ENCODE measurements at regions of chr15 and their contacts with region 1.

Region 1: DNA sequence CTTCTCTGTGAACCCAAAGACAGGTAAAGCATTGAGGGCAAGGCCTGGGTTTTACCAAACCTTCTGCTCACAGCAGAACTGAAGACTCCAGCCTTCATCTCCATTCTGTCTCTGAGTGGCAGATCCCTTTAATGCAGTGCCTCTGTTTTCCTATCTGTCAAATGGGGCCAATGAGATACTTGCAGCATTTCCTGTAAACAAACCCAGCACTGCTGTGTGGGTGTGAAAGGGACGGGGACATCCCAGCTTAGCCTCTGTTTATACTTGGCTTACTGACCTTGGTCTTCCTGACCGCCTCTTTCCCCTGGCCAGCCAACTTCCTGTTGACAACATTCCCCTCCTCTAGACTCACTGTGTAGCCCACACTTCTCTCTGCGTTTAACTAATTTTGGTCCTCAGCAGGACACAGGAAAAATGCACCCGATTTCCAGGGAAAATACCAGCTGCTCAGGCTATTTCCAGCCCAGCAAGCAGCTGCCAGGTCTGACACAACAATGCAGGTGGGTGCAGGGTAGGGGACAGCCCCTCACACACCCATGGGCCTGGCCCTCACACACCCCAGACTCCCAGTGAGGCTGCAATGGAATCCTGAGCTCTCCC is 105.9 kb upstream of the HERC1 start:
- DNase-seq: peak; percentile 98
- H3K4me3 ChIP-seq: no peak overlapping the region
- H3K27ac ChIP-seq: peak overlapping the region; percentile 73
- H3K4me1 ChIP-seq: peaks cover 38% of the 10 kb centered on the region
- H3K27me3 ChIP-seq: no peaks in the 10 kb centered on the region
- CTCF ChIP-seq: no peak
- POLR2A ChIP-seq: no peak

Region 2: GRCh38 chr15:63839722-63840121 is 99.9 kb before region 1 on chr15:
- CTCF ChIA-PET with region 1: interaction called, 5 read pairs
- POLR2A ChIA-PET with region 1: no interaction called
- dilution Hi-C with region 1: no loop called
- intact Hi-C with region 1: loop called (anchors 1 kb)
- DNase-seq: peak; percentile 65
- H3K4me3 ChIP-seq: no peak overlapping the region
- H3K27ac ChIP-seq: no peak overlapping the region
- H3K4me1 ChIP-seq: peaks cover 45% of the 10 kb centered on the region
- H3K27me3 ChIP-seq: no peaks in the 10 kb centered on the region
- CTCF ChIP-seq: no peak
- POLR2A ChIP-seq: no peak

Region 3: GRCh38 chr15:63858880-63859279 is 80.8 kb before region 1 on chr15:
- CTCF ChIA-PET with region 1: interaction called, 3 read pairs
- POLR2A ChIA-PET with region 1: no interaction called
- dilution Hi-C with region 1: no loop called
- intact Hi-C with region 1: loop called (anchors 1 kb)
- DNase-seq: peak; percentile 95
- H3K4me3 ChIP-seq: no peak overlapping the region
- H3K27ac ChIP-seq: peak overlapping the region; percentile 90
- H3K4me1 ChIP-seq: peaks cover 28% of the 10 kb centered on the region
- H3K27me3 ChIP-seq: no peaks in the 10 kb centered on the region
- CTCF ChIP-seq: no peak
- POLR2A ChIP-seq: no peak

Region 4: GRCh38 chr15:63909819-63910437 is 29.7 kb before region 1 on chr15:
- CTCF ChIA-PET with region 1: interaction called, 12 read pairs
- POLR2A ChIA-PET with region 1: no interaction called
- dilution Hi-C with region 1: no loop called
- intact Hi-C with region 1: loop called (anchors 5 kb)
- DNase-seq: peak; percentile 89
- H3K4me3 ChIP-seq: no peak overlapping the region
- H3K27ac ChIP-seq: peak overlapping the region; percentile 39
- H3K4me1 ChIP-seq: peaks cover 32% of the 10 kb centered on the region
- H3K27me3 ChIP-seq: no peaks in the 10 kb centered on the region
- CTCF ChIP-seq: no peak
- POLR2A ChIP-seq: no peak

Region 5: DNA sequence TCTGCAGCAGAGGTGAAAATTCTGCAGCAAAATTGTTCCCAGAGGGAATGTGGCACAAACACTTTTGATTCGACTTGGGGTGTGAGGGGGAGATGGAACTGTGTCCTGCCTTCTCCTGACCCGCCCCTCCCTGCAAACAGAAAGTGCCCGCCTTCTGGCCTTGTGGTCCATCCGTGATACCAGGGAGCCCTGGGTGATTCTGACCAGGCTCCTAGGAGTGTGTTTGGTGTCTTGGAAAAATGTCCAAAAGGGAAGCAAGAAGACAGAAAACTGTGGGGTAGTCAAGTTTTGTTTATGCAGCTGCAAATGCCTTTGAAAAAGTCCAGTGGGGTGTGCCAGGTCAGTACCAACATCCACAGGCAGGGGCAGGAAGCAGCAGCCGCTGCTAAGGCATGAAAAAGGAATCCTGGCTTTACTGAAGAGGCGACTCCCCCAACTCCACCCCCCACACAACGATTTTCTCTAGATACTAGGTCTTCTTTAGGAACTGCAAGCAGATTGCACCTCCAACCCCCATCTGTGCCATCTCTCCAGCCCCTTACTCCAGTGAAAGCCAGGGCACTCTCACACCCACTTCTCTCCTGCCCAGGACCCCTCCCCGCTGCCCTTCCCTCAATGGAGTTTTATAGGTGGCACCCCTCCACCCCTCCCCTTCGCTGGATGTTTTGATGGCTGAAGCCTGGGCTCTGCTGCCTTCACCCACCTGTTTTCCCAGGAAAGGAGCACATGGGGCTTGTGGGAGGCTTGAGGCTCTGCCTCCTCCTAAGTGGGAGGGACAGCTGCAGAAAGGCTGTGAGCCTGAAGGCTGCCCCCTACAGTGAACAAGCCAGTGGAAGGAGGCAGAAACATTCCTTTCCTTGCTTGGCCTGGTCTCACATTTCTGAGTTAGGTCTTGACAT is 23.5 kb before region 1 on chr15:
- CTCF ChIA-PET with region 1: interaction called, 5 read pairs
- POLR2A ChIA-PET with region 1: no interaction called
- dilution Hi-C with region 1: no loop called
- intact Hi-C with region 1: loop called (anchors 1 kb)
- DNase-seq: peak; percentile 78
- H3K4me3 ChIP-seq: no peak overlapping the region
- H3K27ac ChIP-seq: no peak overlapping the region
- H3K4me1 ChIP-seq: peaks cover 7% of the 10 kb centered on the region
- H3K27me3 ChIP-seq: no peaks in the 10 kb centered on the region
- CTCF ChIP-seq: peak; percentile 37 to 67
- POLR2A ChIP-seq: no peak

Measured in endothelial cell of umbilical vein (primary cell).